Activated naive CD8-positive, alpha-beta T cell treated with anti-CD3 and anti-CD28 coated beads, Interleukin-2, amount 10 ng/mL, durations not matched to agents 7 days and 5 days (primary cell): ENCODE measurements at regions of chr5 and their contacts with region 1.

Region 1: DNA sequence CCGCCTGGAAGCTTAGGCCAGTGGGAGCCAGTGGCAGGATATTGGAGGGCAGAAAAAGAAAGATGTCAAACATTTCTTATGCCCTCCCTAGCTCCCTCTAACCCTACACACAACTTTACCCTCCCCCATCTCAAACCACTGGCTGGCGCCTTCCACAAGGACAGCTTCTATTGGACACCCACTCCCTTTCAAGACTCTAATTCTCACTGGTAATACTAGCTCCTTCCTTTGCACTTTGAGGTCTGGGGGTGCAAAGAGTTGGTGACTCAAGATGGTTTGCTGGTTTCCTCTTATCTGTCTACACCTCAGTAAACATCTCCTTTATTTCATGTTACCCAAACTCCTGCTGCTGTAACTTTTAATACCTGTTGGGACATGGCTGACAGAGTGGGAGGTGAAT is 11.6 kb upstream of the ITGA1 start:
- DNase-seq: peak; percentile 53
- ATAC-seq: peak; percentile 80
- H3K4me3 Mint-ChIP-seq: peak overlapping the region; percentile 79
- H3K27ac Mint-ChIP-seq: peak overlapping the region; percentile 91
- H3K4me1 Mint-ChIP-seq: peaks cover 47% of the 10 kb centered on the region
- H3K27me3 Mint-ChIP-seq: no peaks in the 10 kb centered on the region

Region 2: DNA sequence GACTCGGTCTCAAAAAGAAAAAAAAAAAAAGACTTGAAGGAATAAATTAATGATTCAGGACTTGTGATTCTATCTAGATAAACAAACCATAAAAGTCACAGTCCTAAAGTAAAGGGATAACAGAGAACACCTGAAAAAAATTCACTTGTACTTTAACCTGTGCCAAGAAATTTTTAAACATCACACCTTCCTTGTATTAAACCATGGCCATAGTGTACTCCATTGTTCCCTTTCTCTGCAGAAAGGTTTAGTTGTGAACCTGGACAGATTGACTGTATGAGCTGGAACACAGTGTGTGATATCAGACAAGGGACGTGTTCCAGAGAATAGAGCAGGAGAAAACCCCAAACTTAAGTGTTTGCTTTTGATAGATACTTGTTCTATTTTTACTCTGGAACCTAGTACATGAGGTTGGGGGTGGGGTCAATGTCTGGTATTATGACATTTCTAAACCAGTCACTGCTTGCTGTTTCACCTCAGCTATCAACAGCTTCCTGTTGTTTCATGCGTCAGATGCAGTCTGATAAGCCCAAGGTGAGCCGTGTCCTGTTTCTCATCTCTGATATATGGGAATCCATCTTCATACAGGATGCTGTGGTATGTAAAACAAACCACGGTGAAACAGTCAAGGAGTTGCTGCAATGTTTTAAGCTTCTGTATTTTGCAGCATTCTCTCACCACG is 50.9 kb before region 1 on chr5:
- POLR2A ChIA-PET with region 1: interaction called, 12 read pairs
- DNase-seq: no peak
- ATAC-seq: peak; percentile 99
- H3K4me3 Mint-ChIP-seq: peak overlapping the region; percentile 80
- H3K27ac Mint-ChIP-seq: peak overlapping the region; percentile 94
- H3K4me1 Mint-ChIP-seq: peaks cover 38% of the 10 kb centered on the region
- H3K27me3 Mint-ChIP-seq: no peaks in the 10 kb centered on the region